Right ventricle myocardium inferior (tissue), 1 donor: ENCODE measurements at regions of chr17 and their contacts with region 1.

Region 1: GRCh38 chr17:55717898-55718735 is 4.5 kb downstream of the TMEM100 start:
- DNase-seq: peak; percentile 86
- ATAC-seq: peak; percentile 51

Region 2: GRCh38 chr17:55641676-55642081 is 76.4 kb before region 1 on chr17:
- intact Hi-C with region 1: loop called (anchors 2 kb)
- DNase-seq: no peak
- ATAC-seq: peak; percentile 78

Region 3: GRCh38 chr17:55668312-55668920 is 49.7 kb before region 1 on chr17:
- intact Hi-C with region 1: loop called (anchors 5 kb)
- DNase-seq: no peak
- ATAC-seq: no peak

Region 4: GRCh38 chr17:55770148-55770870 is 52.2 kb after region 1 on chr17:
- intact Hi-C with region 1: loop called (anchors 2 kb)
- DNase-seq: no peak
- ATAC-seq: peak; percentile 57

Region 5: GRCh38 chr17:55895112-55895759 is 177.1 kb after region 1 on chr17:
- intact Hi-C with region 1: no loop called
- DNase-seq: no peak
- ATAC-seq: no peak